ENCODE measurements at regions of chr21 and their contacts with region 1.

Region 1: GRCh38 chr21:41816220-41817165 is 49.6 kb upstream of the RIPK4 start:
- DNase-seq: peak; percentile 50 to 85 (median 71)

Region 2: GRCh38 chr21:41684381-41685245 is 131.9 kb before region 1 on chr21:
- intact Hi-C with region 1: no loop called
- DNase-seq: no peak

Region 3: GRCh38 chr21:41926117-41926806 is 109.8 kb after region 1 on chr21:
- intact Hi-C with region 1: no loop called
- DNase-seq: peak in 1 of 42 donors; percentile 24

Region 4: DNA sequence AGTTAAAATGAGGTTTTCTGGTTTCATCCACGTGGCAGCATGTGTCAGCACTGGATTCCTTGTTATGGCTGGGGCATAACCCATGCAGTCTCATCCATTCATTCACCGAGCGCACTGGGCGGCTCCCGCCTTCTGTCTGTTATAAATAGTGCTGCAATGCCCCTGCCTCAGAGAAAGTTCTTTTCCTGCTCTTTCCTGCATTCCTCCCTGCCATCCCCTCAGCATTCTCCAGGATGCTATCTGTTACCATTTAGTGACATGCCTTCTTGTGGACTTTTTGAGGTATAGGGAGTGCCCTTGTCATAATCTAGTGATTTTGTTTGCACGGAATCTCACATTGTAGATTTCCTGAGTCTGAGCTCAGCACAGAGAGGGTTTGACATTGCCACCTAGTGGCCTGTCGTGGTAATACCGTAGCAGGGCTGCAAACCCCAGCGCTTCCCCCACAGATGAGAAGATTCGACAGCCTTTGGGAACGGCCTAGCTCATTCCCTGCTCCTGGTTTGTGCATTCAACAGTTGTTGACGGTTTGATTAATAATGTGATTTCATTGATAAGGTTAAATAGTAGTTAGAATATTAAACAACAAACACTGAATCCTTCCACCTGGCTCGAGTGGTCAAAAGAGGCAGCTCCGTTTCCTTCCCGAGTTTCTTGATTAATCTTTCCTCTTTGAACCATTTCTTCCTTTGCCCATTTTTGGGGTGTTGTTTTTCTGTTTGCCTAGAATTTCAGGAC is 300.9 kb after region 1 on chr21:
- intact Hi-C with region 1: loop called (anchors 2 kb)
- DNase-seq: peak; percentile 64 to 95 (median 87)